HepG2 (cell line): ENCODE measurements at regions of chr2 and their contacts with region 1.

Region 1: DNA sequence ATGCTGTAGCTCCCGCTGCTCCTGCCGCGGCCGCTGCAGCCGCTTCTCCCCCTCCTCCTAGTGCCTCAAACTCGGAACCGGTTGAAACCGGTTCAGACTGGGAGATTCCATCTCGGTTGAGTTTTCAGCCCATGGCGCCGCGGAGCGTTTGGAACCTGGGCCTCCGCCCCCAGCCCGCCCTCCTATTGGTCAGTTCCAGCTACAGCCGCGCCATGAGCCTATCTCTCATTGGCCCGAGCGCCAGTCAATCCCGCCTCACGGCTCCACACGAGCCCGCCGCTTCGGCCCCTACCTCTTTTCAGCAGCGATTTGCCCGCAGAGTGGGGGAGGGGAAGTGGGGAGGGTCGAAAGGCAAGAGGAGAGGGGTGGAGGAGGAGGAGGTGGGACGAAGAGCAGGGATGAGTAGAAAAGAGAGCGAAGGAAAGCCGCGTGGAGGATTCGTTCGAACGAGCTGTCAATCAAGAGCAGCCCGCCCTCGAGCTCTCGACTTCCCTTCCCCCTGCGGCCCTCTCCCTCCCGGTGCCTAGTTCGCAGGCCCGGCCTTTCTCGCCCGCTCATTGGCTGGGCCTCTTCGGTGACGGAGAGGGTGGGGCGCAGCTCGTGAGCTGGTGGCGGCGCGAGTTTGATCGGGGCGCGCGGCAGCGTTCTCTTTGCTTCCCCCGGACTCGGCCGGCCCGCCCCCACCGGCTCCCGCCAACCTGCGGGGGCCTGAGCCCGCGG is at the start of gene XPO1:
- DNase-seq: peak; percentile 99
- ATAC-seq: peak; percentile 92
- H3K4me3 ChIP-seq: peak within 1 kb of the TSS; percentile 71 to 99 (median 91)
- H3K27ac ChIP-seq: peak within 1 kb of the TSS; percentile 93
- H3K4me1 ChIP-seq: peaks cover 38% of the 10 kb centered on the region
- H3K27me3 ChIP-seq: no peaks in the 10 kb centered on the region; a peak in 1 of 5 replicates
- CTCF ChIP-seq: no peak
- EP300 ChIP-seq: peak; percentile 25 to 34; a peak in 1 of 4 replicates
- POLR2A ChIP-seq: peak; percentile 90 to 95
- RAD21 ChIP-seq: peak; percentile 54; the same call in 1 of the 2 replicates
- total RNA-seq, gene XPO1: 212 and 301 TPM in 2 replicates

Region 2: GRCh38 chr2:61176755-61177726 is 361.3 kb before region 1 on chr2:
- CTCF ChIA-PET with region 1: no interaction called
- POLR2A ChIA-PET with region 1: interaction called, 11 read pairs
- in situ Hi-C with region 1: no loop called
- intact Hi-C with region 1: no loop called
- DNase-seq: peak; percentile 94
- ATAC-seq: peak; percentile 92
- H3K4me3 ChIP-seq: peak overlapping the region; percentile 85 to 94 (median 93)
- H3K27ac ChIP-seq: peak overlapping the region; percentile 93
- H3K4me1 ChIP-seq: peaks cover 63% of the 10 kb centered on the region
- H3K27me3 ChIP-seq: no peaks in the 10 kb centered on the region
- CTCF ChIP-seq: peak; percentile 59
- EP300 ChIP-seq: peak; percentile 17 to 78; a peak in 2 of 4 replicates
- POLR2A ChIP-seq: peak; percentile 96 to 99
- RAD21 ChIP-seq: peak; percentile 82

Region 3: DNA sequence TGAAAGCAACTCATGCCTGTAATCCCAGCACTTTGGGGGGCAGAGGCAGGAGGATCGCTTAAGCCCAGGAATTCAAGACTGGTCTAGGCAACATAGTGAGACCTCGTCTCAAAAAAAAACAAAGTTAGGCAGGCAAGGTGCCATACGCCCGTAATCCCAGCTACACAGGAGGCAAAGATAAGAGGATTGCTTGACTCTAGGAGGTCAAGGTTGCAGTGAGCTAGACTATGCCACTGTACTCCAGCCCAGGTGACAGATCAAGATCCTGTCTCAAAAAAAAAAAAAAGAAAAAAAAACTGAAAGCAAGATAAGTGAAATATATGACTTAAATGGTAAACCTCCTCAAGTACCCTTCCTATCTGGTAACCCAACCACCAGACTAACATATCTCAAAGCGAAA is 127.3 kb before region 1 on chr2:
- CTCF ChIA-PET with region 1: no interaction called
- POLR2A ChIA-PET with region 1: no interaction called
- in situ Hi-C with region 1: no loop called
- intact Hi-C with region 1: no loop called
- DNase-seq: no peak
- ATAC-seq: peak; percentile 75
- H3K4me3 ChIP-seq: no peak overlapping the region
- H3K27ac ChIP-seq: no peak overlapping the region
- H3K4me1 ChIP-seq: peaks cover 14% of the 10 kb centered on the region
- H3K27me3 ChIP-seq: no peaks in the 10 kb centered on the region
- CTCF ChIP-seq: no peak
- EP300 ChIP-seq: no peak
- POLR2A ChIP-seq: no peak
- RAD21 ChIP-seq: no peak

Region 4: GRCh38 chr2:61470965-61471904 is 67.1 kb before region 1 on chr2 and contains the start of gene USP34:
- CTCF ChIA-PET with region 1: no interaction called
- POLR2A ChIA-PET with region 1: interaction called, 21 read pairs
- in situ Hi-C with region 1: no loop called
- intact Hi-C with region 1: loop called (anchors 1 kb)
- DNase-seq: peak; percentile 92
- ATAC-seq: peak; percentile 89
- H3K4me3 ChIP-seq: peak within 1 kb of the TSS; percentile 89 to 99 (median 91)
- H3K27ac ChIP-seq: peak within 1 kb of the TSS; percentile 97
- H3K4me1 ChIP-seq: peaks cover 41% of the 10 kb centered on the region
- H3K27me3 ChIP-seq: no peaks in the 10 kb centered on the region; a peak in 1 of 5 replicates
- CTCF ChIP-seq: no peak
- EP300 ChIP-seq: 0 out of 4 replicates have a peak, but pooled peaks of 1 of the 2 experiments have one; percentile 13
- POLR2A ChIP-seq: peak; percentile 90 to 97
- RAD21 ChIP-seq: peak; percentile 58
- total RNA-seq, gene USP34: 100 and 155 TPM in 2 replicates

Region 5: DNA sequence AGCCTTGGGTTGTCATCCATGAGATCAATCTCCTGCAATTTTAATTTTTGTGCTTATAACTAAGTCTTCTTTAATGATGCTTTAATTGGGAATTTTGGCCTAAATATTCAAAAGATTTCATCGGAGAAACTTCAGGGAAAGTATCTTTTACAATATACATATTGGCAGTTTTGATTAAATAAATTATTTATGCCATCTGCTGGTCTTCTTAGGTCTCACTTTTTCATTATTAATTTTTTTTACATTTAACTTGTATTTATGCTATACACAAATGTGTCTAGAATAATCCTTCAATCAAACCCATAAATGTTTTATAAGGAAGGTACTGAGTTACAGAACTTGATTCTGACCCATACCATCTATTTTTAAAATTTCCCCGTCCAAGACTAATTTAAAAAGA is 94.9 kb after region 1 on chr2:
- CTCF ChIA-PET with region 1: no interaction called
- POLR2A ChIA-PET with region 1: interaction called, 8 read pairs
- in situ Hi-C with region 1: no loop called
- intact Hi-C with region 1: loop called (anchors 5 kb)
- DNase-seq: no peak
- ATAC-seq: no peak
- H3K4me3 ChIP-seq: no peak overlapping the region
- H3K27ac ChIP-seq: no peak overlapping the region
- H3K4me1 ChIP-seq: peaks cover 35% of the 10 kb centered on the region
- H3K27me3 ChIP-seq: no peaks in the 10 kb centered on the region
- CTCF ChIP-seq: no peak
- EP300 ChIP-seq: no peak
- POLR2A ChIP-seq: no peak
- RAD21 ChIP-seq: no peak

Region 6: GRCh38 chr2:61764035-61764800 is 225.9 kb after region 1 on chr2:
- CTCF ChIA-PET with region 1: no interaction called
- POLR2A ChIA-PET with region 1: interaction called, 10 read pairs
- in situ Hi-C with region 1: no loop called
- intact Hi-C with region 1: loop called (anchors 10 kb)
- DNase-seq: peak; percentile 89
- ATAC-seq: peak; percentile 99
- H3K4me3 ChIP-seq: peak overlapping the region; percentile 53 to 85 (median 83)
- H3K27ac ChIP-seq: peak overlapping the region; percentile 77
- H3K4me1 ChIP-seq: peaks cover 7% of the 10 kb centered on the region; the same call in 1 of the 2 replicates
- H3K27me3 ChIP-seq: no peaks in the 10 kb centered on the region; a peak in 1 of 5 replicates
- CTCF ChIP-seq: no peak
- EP300 ChIP-seq: 0 out of 4 replicates have a peak, but pooled peaks have one; percentile 10 to 21
- POLR2A ChIP-seq: peak; percentile 71 to 86
- RAD21 ChIP-seq: no peak

Region 7: DNA sequence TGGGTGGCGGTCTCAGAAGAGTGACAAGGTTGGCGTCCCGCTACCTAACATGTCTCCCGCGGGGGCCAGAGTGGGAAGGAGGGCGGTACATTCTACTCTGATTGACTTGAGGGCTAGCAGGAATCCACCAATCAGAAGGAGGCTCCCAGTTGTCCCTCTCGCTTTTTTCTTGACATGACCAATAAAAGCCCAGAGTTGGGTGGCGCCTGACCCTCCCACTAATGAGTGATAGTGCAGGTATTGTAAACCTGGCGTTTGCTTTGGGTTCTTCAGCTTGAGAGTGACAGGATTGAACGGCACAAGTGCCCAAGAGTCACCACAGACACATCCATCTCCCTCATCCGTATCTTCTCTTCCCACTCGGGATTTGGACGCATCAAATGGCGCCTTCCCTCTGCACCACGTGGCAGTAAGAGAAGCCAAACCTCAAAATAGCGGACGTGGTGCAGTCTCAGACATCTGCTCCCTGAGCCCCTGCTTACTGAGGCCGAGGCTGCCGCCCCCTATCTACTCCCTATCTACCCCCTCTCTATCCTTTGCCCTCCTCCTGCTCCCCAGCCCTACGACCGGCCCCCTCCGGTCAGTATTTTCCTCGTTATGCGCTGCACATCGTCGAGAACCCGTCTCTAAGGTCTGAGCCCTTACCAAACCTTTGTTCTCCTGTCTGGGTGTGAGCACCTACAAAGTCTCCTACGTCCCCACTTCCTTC is 316.3 kb after region 1 on chr2:
- CTCF ChIA-PET with region 1: no interaction called
- POLR2A ChIA-PET with region 1: interaction called, 10 read pairs
- in situ Hi-C with region 1: no loop called
- intact Hi-C with region 1: no loop called
- DNase-seq: peak; percentile 100
- ATAC-seq: peak; percentile 90
- H3K4me3 ChIP-seq: peak overlapping the region; percentile 61 to 93 (median 82)
- H3K27ac ChIP-seq: peak overlapping the region; percentile 87
- H3K4me1 ChIP-seq: peaks cover 19% of the 10 kb centered on the region
- H3K27me3 ChIP-seq: no peaks in the 10 kb centered on the region; a peak in 1 of 5 replicates
- CTCF ChIP-seq: no peak; the same call in 1 of the 2 replicates
- EP300 ChIP-seq: no peak
- POLR2A ChIP-seq: peak; percentile 85 to 92
- RAD21 ChIP-seq: no peak; the same call in 1 of the 2 replicates

Region 8: DNA sequence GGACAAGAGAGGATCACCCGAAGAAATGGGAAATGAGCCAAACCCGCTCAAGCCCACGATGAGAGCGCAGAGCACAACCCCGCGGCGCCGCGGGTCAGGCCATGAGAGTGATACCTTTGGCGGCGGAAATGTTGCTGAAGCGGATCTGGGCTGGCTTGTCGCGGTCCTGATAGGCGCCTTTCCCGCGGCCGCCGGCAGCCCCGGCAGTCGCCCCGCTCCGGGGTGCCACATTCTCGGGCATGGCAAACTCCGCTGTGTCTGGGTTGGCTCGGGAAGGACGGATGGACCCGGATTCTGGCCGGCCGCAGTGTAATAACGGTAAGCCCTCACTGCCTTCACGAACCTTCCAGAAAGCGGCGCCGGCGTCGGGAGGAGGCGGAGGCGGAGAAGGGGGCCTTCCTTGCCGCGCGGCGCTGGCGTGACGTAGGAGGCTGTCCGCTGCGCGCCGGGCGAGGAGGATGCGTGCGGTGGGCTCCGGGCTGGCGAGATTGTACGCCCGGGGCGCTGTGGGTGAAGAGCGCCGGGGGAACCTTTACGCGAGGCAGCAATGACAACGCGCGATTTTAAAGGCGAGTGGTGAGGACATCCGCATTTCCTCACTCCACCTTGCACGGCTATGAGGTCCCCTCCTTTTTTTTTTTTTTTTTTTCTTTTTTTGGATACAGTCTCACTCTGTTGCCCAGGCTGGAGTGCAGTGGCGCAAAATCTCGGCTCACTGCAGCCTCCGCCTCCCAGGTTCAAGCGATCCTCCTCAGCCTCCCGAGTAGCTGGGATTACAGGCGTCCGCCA is 350.1 kb after region 1 on chr2 and contains the start of gene CCT4:
- CTCF ChIA-PET with region 1: no interaction called
- POLR2A ChIA-PET with region 1: no interaction called
- in situ Hi-C with region 1: no loop called
- intact Hi-C with region 1: loop called (anchors 5 kb)
- DNase-seq: peak; percentile 83
- ATAC-seq: peak; percentile 88
- H3K4me3 ChIP-seq: peak within 1 kb of the TSS; percentile 78 to 99 (median 98)
- H3K27ac ChIP-seq: peak within 1 kb of the TSS; percentile 92
- H3K4me1 ChIP-seq: peaks cover 32% of the 10 kb centered on the region
- H3K27me3 ChIP-seq: no peaks in the 10 kb centered on the region; a peak in 1 of 5 replicates
- CTCF ChIP-seq: peak; percentile 53
- EP300 ChIP-seq: peak in 1 of 2 experiments; percentile 85; a peak in 2 of 4 replicates
- POLR2A ChIP-seq: peak; percentile 96 to 98
- RAD21 ChIP-seq: peak; percentile 64
- total RNA-seq, gene CCT4: 340 and 437 TPM in 2 replicates